ENCODE measurements at regions of chr14 and their contacts with region 1.

Region 1: DNA sequence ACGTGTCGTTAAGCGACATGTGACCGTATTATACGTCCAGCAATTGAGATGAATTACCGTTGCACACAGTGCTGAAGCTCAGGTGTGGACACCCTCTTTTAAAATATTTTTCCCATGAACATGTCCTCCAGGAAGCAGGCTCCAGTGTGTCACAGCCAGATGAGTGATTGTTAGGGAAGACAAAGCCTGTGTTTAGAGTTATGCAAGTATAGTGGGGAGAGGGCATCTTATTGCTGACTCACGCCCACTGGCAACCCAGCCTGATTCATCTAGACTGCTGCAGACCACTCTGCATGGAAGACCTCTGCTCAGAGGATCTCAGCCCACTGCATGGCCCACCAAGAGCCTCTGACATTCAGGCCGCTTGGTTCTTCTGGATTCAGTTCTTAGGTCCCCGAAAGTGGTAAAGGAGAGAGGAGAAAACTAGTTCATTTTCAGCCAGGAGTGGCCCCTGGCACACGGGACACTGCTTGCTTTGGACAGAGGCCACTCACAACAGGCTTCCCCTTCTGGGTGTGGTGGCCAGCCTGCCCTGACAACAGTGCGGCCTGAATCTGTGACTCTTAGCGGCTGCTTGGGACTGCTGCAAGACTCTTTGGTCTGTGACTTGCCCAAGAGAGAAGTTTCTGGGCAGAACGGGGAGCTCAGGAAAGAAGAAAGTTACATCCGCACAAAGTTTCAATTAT is 266.3 kb downstream of the ZFP36L1 start:
- DNase-seq: peak; percentile 71 to 74
- H3K4me3 ChIP-seq: no peak overlapping the region
- H3K27ac ChIP-seq: peak overlapping the region; percentile 87
- H3K4me1 ChIP-seq: peaks cover 45% of the 10 kb centered on the region
- H3K27me3 ChIP-seq: no peaks in the 10 kb centered on the region
- CTCF ChIP-seq: no peak

Region 2: GRCh38 chr14:68239988-68240771 is 286.4 kb before region 1 on chr14:
- CTCF ChIA-PET with region 1: interaction called, 11 read pairs
- POLR2A ChIA-PET with region 1: no interaction called
- intact Hi-C with region 1: no loop called
- DNase-seq: no peak
- H3K4me3 ChIP-seq: no peak overlapping the region
- H3K27ac ChIP-seq: no peak overlapping the region
- H3K4me1 ChIP-seq: no peaks in the 10 kb centered on the region
- H3K27me3 ChIP-seq: no peaks in the 10 kb centered on the region
- CTCF ChIP-seq: no peak

Measured in PC-9 (cell line).